Gastrocnemius medialis (tissue), 4 donors: ENCODE measurements at regions of chr4 and their contacts with region 1.

Region 1: GRCh38 chr4:26583865-26584652 is at the start of gene TBC1D19:
- DNase-seq: peak; percentile 81 to 82
- ATAC-seq: peak; percentile 99 to 100
- H3K4me3 ChIP-seq: peak within 1 kb of the TSS; percentile 53 to 96 (median 67)
- H3K27ac ChIP-seq: peak within 1 kb of the TSS; percentile 64 to 84 (median 69)
- H3K4me1 ChIP-seq: peaks cover 6 to 9% of the 10 kb centered on the region in 2 donors
- H3K27me3 ChIP-seq: no peaks in the 10 kb centered on the region
- CTCF ChIP-seq: no peak
- POLR2A ChIP-seq: peak; percentile 23 to 35
- total RNA-seq, gene TBC1D19: 6.5 to 7.0 (median 6.8) TPM

Region 2: GRCh38 chr4:25406081-25406692 is 1177.9 kb before region 1 on chr4:
- in situ Hi-C with region 1: no loop called
- intact Hi-C with region 1: no loop called
- DNase-seq: no peak
- ATAC-seq: no peak
- H3K4me3 ChIP-seq: no peak overlapping the region
- H3K27ac ChIP-seq: no peak overlapping the region
- H3K4me1 ChIP-seq: no peaks in the 10 kb centered on the region
- H3K27me3 ChIP-seq: no peaks in the 10 kb centered on the region
- CTCF ChIP-seq: no peak
- POLR2A ChIP-seq: no peak

Region 3: DNA sequence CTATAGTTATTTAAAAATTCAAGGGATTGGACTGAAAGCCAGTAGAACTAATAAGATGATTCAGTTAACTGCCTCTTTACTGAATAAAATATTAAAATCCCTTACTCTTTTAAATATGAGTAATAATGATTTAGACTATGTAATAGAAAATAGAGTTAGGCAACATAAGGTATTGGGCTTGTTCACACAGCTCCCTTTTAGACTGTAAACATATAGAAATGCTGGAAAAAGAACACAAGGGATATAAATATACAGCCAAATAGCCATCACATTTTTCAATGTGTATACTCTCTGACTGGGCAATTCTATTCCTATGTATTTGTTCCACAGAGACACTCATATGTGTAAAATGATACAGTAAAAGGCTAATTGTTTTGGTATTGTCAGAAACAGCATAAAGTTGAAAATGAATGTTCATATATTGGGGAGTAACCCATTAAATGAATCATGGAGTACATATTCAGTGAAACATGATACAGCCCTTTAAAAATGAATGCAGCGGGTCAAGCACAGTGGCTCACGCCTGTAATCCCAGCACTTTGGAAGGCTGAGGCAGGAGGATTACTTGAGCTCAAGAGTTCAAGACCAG is 129.6 kb after region 1 on chr4:
- in situ Hi-C with region 1: no loop called
- intact Hi-C with region 1: no loop called
- DNase-seq: no peak
- ATAC-seq: no peak
- H3K4me3 ChIP-seq: no peak overlapping the region
- H3K27ac ChIP-seq: no peak overlapping the region
- H3K4me1 ChIP-seq: no peaks in the 10 kb centered on the region
- H3K27me3 ChIP-seq: no peaks in the 10 kb centered on the region
- CTCF ChIP-seq: no peak
- POLR2A ChIP-seq: no peak

Region 4: DNA sequence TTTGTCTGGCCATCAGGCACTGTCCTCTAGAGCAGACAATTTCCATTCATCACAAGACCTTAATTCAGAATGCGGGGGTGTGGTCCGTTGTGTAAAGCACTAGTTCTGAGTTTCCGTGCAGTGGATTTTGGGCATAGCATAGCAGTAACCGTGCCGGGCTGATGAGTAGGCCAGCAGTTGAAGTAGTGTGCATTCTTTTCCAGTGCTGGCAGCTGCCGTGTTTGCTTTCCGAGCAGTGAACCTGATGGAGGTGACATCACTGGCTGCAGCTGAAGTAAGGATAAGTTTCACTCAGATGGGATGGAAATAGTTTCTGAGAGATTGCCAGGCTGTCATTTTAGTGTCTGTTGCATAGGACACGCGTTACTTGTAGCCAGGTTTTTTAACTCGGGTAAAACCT is 169.6 kb after region 1 on chr4:
- in situ Hi-C with region 1: no loop called
- intact Hi-C with region 1: loop called (anchors 10 kb)
- DNase-seq: peak; percentile 71 to 78
- ATAC-seq: peak; percentile 99
- H3K4me3 ChIP-seq: no peak overlapping the region
- H3K27ac ChIP-seq: peak overlapping the region; percentile 50 to 67 (median 61)
- H3K4me1 ChIP-seq: peaks cover 24 to 45% of the 10 kb centered on the region in 2 donors
- H3K27me3 ChIP-seq: no peaks in the 10 kb centered on the region
- CTCF ChIP-seq: no peak
- POLR2A ChIP-seq: no peak

Region 5: DNA sequence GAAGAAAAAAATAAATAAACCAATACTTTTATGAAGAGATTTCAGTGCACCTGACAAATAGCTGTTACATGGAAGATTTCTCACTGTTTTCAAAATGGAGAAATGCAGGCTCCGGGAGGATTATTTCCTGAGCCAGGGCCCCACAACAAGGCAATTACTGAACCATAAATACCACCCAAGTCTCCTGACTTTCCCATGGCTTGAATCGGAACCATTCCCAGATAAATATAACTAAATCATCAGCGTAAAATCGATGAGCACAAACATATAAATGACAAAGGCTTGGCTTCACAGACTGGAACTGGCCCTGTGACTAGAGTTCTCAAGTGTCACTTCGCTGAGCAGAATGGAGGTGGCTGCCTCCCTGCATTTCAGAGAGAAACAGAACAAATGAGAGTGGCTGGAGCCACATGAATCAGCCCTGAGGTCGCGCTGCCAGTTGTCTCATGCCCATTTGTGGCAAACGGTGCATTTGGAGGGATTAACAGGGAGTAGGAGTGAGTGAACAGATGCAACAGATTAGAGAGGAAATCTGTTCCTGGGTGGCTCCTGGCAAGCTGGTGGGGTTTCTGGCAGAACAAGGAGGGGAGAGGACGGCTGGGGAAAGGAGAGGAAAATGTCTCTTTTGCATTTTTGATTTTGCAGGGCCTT is 219.3 kb after region 1 on chr4:
- in situ Hi-C with region 1: no loop called
- intact Hi-C with region 1: no loop called
- DNase-seq: no peak
- ATAC-seq: peak in 1 of 2 donors; percentile 39
- H3K4me3 ChIP-seq: peak overlapping the region in 2 of 4 donors; percentile 10 to 27
- H3K27ac ChIP-seq: no peak overlapping the region
- H3K4me1 ChIP-seq: peaks cover 0 to 10% of the 10 kb centered on the region in 2 donors
- H3K27me3 ChIP-seq: no peaks in the 10 kb centered on the region
- CTCF ChIP-seq: no peak
- POLR2A ChIP-seq: no peak

Region 6: DNA sequence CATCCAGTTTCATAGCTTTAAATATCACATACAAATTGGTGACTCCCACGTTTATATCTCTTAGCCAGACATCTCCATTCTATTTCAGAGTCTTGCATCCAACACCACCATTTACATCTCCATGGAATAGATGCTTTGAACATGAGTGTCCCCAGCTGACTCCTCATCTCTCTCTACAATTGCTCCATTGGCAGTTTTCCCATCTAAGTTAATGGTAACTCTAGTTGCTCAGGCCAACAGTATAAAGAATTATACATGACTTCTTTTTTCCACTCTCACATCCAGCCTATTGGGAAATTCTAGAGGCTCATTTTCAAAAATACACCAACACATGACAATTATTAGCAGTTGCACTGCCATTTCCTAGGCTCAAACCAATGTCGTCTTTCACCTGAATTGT is 664.8 kb after region 1 on chr4:
- in situ Hi-C with region 1: no loop called
- intact Hi-C with region 1: no loop called
- DNase-seq: no peak
- ATAC-seq: peak in 1 of 2 donors; percentile 39
- H3K4me3 ChIP-seq: no peak overlapping the region
- H3K27ac ChIP-seq: no peak overlapping the region
- H3K4me1 ChIP-seq: no peaks in the 10 kb centered on the region
- H3K27me3 ChIP-seq: no peaks in the 10 kb centered on the region
- CTCF ChIP-seq: no peak
- POLR2A ChIP-seq: no peak